Dendritic cell treated with granulocyte-macrophage colony-stimulating factor and Interleukin-4, amounts not matched to agents 40 ng/mL and 50 ng/mL, for 4 days (primary cell): ENCODE measurements at regions of chr18 and their contacts with region 1.

Region 1: GRCh38 chr18:54224379-54225014 is at the start of gene MBD2:
- H3K4me3 Mint-ChIP-seq: peak within 1 kb of the TSS; percentile 94
- H3K27ac Mint-ChIP-seq: peak within 1 kb of the TSS; percentile 97
- H3K4me1 Mint-ChIP-seq: peaks cover 38% of the 10 kb centered on the region
- H3K27me3 Mint-ChIP-seq: no peaks in the 10 kb centered on the region

Region 2: GRCh38 chr18:54284981-54285785 is 60.7 kb after region 1 on chr18:
- intact Hi-C with region 1: no loop called
- H3K4me3 Mint-ChIP-seq: no peak overlapping the region
- H3K27ac Mint-ChIP-seq: no peak overlapping the region
- H3K4me1 Mint-ChIP-seq: peaks cover 2% of the 10 kb centered on the region
- H3K27me3 Mint-ChIP-seq: no peaks in the 10 kb centered on the region

Region 3: DNA sequence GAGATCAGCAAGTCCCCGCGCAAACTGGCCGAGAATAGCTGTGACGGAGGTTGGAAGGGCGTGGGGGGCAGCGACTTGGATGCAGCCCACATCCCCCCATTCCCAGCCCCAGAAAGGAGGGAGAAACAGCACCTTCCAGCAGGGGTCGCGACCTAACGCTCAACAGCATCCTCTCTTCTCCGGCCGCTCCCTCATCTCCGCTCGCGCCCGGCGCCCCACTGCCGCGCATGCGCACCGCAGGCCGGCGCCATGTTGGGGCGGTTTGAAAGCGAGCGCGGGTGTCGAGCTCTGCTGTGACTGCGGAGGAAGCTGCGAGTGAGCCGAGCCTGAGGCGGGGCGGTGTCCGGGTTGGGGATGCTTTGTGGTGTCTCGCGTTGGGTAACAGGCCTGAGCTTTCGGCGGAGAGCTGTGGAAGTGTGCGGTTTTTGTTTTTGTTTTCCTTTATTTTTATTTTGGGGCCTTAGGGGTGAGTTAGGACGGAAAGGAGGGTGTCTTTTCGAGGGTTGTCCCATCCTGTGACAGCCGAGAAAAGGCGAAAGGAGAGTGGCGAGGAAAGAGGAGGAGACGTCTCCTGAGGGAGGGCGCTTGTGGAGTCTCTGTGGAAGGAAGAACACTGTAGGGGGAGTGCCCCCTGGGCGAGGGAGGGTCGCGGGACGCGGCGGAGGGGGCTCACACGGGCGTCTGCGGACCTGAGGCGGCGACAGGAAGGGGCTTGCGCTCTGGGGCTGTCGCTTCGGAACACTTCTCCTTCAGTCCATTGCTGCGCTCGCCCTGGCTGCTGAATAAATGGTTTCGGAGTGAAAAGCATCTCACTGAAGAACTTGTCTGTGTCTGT is 133.4 kb after region 1 on chr18 and contains the starts of genes C18orf54 and STARD6:
- intact Hi-C with region 1: loop called (anchors 1 kb)
- H3K4me3 Mint-ChIP-seq: peak within 1 kb of the TSS; percentile 99
- H3K27ac Mint-ChIP-seq: peak within 1 kb of the TSS; percentile 88
- H3K4me1 Mint-ChIP-seq: peaks cover 16% of the 10 kb centered on the region
- H3K27me3 Mint-ChIP-seq: peaks cover 6% of the 10 kb centered on the region

Region 4: DNA sequence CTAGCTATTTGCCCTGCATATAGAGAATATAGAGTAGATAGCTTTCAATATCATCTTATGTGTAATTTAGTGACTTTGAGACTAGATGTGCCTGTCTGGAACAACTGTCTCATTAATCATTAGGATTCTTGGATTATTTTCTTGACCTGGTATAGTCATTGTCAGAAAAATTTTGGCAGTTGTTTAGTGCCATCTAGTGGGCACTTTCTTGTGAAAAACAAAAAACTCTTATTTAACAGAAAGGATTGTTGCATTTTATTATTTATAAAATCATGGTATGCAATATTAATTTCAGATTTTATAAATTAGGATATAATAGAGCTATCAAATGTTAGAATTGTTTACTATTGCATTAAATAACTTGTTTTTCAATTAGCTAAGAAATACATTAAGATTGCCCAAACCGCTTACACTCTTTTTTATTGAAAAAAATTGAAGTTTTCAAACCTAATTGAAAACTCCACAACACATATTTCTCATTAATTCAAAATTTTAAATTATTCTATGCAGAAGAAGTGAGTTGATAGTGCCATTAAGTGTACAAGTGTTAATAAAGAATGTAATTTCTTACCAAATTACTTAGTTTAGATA is 446.9 kb after region 1 on chr18:
- intact Hi-C with region 1: no loop called
- H3K4me3 Mint-ChIP-seq: no peak overlapping the region
- H3K27ac Mint-ChIP-seq: no peak overlapping the region
- H3K4me1 Mint-ChIP-seq: no peaks in the 10 kb centered on the region
- H3K27me3 Mint-ChIP-seq: no peaks in the 10 kb centered on the region